Heart right ventricle (tissue), 16 donors: ENCODE measurements at regions of chr3 and their contacts with region 1.

Region 1: DNA sequence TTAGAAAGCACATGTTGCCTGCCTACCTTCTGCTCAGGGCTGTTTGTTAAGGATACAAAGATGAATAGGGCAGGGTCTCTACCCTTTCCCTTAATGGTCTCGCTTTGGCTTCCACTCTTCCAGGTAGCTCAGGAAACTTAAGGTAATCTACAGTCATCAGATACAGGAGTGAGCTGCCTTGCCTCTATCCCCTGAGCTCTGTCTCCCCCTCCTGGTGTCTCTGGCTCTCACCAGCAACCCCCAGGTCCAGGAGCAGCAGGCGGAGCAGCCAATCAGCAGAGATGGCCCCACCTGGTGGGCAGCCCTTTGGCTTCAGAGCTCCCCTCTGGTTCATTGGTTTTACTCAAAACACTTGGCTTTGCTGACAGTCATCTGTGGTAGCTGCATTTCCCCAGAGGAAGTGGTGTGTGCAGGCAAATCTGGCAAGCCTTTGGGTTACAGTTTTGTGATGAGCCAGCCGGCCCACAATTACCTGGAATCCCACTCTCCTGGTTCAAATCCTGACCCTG is 8.5 kb upstream of the CX3CR1 start:
- DNase-seq: peak; percentile 63 to 83
- ATAC-seq: peak; percentile 80 to 95 (median 92)
- H3K4me3 ChIP-seq: no peak overlapping the region
- H3K27ac ChIP-seq: no peak overlapping the region
- H3K4me1 ChIP-seq: peaks cover 0 to 13% (median 0%) of the 10 kb centered on the region in 9 donors
- H3K27me3 ChIP-seq: no peaks in the 10 kb centered on the region
- CTCF ChIP-seq: peak; percentile 76 to 96 (median 93)

Region 2: GRCh38 chr3:39101022-39101689 is 187.2 kb before region 1 on chr3:
- intact Hi-C with region 1: loop called in 5 of 10 experiments (anchors 1 to 5 kb)
- DNase-seq: no peak
- ATAC-seq: peak in 5 of 8 donors; percentile 30 to 58 (median 45)
- H3K4me3 ChIP-seq: no peak overlapping the region
- H3K27ac ChIP-seq: no peak overlapping the region
- H3K4me1 ChIP-seq: peaks cover 22 to 61% (median 40%) of the 10 kb centered on the region in 9 donors
- H3K27me3 ChIP-seq: no peaks in the 10 kb centered on the region
- CTCF ChIP-seq: peak; percentile 28 to 68 (median 61)

Region 3: DNA sequence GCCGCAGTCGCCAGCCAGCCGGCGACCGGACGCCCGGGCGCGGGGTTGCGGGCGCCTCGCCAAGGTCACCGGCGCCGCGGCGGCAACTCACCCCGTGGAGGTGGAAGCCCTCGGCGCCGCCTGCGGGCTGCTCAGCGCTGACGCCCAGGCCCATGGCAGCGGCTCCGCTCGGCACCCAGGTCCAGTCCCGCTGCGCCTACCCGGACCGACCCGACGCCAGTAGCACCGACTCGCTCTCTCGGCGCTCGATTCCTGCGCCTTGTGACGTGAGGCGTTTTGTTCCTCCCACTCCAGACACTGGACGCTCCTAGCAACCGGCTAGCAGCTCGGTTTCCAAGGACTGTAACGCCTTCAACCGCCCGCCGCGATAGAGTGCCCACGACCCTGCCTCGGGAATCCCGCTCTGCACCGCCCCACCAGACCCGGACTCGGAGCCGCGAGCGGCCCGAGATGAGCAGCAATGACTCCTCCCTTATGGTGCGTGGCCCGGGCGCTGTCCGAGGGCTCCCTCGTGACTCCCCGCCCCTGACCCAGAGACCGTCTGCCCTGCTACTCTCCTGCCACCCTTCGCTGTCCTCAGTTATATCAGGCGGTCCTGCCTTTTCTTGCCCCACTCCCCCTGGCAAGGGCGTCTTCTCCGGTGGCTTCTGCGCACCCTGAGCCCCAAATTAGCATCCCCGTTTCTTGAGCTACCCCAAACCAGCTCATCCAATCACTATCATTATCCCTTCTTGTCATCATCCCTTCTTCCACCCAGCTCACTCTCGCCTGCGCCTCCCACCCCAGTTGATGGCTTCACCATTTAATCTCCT is 180.8 kb before region 1 on chr3 and contains the starts of genes GORASP1 and TTC21A:
- intact Hi-C with region 1: loop called in 5 of 10 experiments (anchors 1 to 5 kb)
- DNase-seq: peak; percentile 87 to 92
- ATAC-seq: peak; percentile 89 to 95 (median 92)
- H3K4me3 ChIP-seq: peak within 1 kb of the TSS; percentile 71 to 100 (median 94)
- H3K27ac ChIP-seq: peak within 1 kb of the TSS; percentile 90 to 99 (median 96)
- H3K4me1 ChIP-seq: peaks cover 24 to 54% (median 44%) of the 10 kb centered on the region in 9 donors
- H3K27me3 ChIP-seq: no peaks in the 10 kb centered on the region
- CTCF ChIP-seq: peak in 3 of 9 donors; percentile 4 to 24 (median 5)
- total RNA-seq, gene GORASP1: 35.8 to 54.2 (median 41.1) TPM
- total RNA-seq, gene TTC21A: 1.1 to 3.1 (median 1.5) TPM

Region 4: DNA sequence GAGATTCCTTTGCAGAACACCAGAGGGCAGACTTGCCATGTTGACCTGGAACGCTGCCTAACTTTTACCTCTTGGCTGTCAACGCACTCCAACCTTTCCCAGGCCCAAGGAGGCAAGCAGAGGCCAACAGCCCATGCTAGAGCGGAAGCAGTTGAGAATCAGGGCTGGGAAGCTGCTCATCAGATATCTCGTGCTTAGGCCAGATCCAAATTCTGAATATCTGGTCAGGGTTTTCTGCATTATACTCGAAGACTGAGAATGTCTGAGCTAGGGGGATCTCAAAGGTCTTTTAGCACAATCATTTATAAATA is 98.4 kb before region 1 on chr3:
- intact Hi-C with region 1: loop called in 7 of 10 experiments (anchors 1 to 5 kb)
- DNase-seq: peak; percentile 52 to 78
- ATAC-seq: peak; percentile 3 to 52 (median 32)
- H3K4me3 ChIP-seq: peak overlapping the region in 9 of 10 donors; percentile 1 to 68 (median 57)
- H3K27ac ChIP-seq: peak overlapping the region; percentile 70 to 98 (median 90)
- H3K4me1 ChIP-seq: peaks cover 10 to 59% (median 29%) of the 10 kb centered on the region in 9 donors
- H3K27me3 ChIP-seq: no peaks in the 10 kb centered on the region
- CTCF ChIP-seq: peak; percentile 8 to 87 (median 76)

Region 5: GRCh38 chr3:39208463-39209055 is 79.8 kb before region 1 on chr3:
- intact Hi-C with region 1: loop called (anchors 1 to 5 kb)
- DNase-seq: peak; percentile 44 to 77
- ATAC-seq: peak in 7 of 8 donors; percentile 73 to 93 (median 90)
- H3K4me3 ChIP-seq: no peak overlapping the region
- H3K27ac ChIP-seq: peak overlapping the region in 7 of 10 donors; percentile 1 to 50 (median 34)
- H3K4me1 ChIP-seq: peaks cover 0 to 20% (median 9%) of the 10 kb centered on the region in 9 donors
- H3K27me3 ChIP-seq: no peaks in the 10 kb centered on the region
- CTCF ChIP-seq: peak; percentile 38 to 83 (median 67)

Region 6: GRCh38 chr3:39788128-39788883 is 500.0 kb after region 1 on chr3:
- intact Hi-C with region 1: no loop called
- DNase-seq: no peak
- ATAC-seq: no peak
- H3K4me3 ChIP-seq: no peak overlapping the region
- H3K27ac ChIP-seq: no peak overlapping the region
- H3K4me1 ChIP-seq: no peaks in the 10 kb centered on the region
- H3K27me3 ChIP-seq: no peaks in the 10 kb centered on the region
- CTCF ChIP-seq: no peak